ENCODE measurements at regions of chr17 and their contacts with region 1.

Region 1: GRCh38 chr17:79393358-79394202 is 217.3 kb downstream of the RBFOX3 start:
- DNase-seq: peak; percentile 89

Region 2: DNA sequence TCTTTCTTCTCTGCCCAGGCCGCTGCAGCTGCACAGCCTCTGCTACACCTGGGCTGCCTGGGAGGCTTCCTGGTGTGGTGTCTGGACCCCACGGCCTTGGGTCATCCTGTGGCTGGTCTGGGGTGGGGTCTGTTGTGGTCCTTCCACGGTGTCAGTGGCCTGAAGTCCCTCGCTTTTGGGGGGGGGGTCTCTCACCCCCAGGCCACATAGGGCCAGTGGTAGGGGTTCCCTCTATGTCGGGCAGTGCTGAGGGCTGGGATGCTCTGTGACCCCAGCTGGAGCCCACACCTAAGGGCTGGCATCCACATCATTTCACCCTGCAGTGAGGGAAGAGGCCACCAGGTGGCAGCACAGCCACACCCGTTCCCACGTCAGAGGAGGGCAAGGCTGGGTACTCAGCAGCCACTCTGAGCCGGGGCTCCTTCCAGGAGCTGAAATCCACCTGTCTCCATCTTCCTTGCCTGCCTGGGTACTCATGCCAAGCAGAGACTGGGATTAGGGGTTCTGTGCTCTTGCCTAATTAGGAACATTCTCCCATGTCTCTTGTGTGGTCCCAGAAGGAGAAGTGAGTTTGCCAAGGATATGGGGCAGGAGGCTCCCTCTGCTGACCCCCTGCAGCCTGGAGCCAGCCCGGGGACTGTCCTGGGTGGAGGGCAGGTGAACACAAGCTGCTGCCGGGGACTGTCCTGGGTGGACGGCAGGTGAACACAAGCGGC is 306.0 kb before region 1 on chr17:
- CTCF ChIA-PET with region 1: interaction called, 24 read pairs
- POLR2A ChIA-PET with region 1: no interaction called
- DNase-seq: peak; percentile 84

Region 3: GRCh38 chr17:79188048-79188447 is 205.5 kb before region 1 on chr17:
- CTCF ChIA-PET with region 1: interaction called, 40 read pairs
- POLR2A ChIA-PET with region 1: no interaction called
- DNase-seq: peak; percentile 75

Region 4: DNA sequence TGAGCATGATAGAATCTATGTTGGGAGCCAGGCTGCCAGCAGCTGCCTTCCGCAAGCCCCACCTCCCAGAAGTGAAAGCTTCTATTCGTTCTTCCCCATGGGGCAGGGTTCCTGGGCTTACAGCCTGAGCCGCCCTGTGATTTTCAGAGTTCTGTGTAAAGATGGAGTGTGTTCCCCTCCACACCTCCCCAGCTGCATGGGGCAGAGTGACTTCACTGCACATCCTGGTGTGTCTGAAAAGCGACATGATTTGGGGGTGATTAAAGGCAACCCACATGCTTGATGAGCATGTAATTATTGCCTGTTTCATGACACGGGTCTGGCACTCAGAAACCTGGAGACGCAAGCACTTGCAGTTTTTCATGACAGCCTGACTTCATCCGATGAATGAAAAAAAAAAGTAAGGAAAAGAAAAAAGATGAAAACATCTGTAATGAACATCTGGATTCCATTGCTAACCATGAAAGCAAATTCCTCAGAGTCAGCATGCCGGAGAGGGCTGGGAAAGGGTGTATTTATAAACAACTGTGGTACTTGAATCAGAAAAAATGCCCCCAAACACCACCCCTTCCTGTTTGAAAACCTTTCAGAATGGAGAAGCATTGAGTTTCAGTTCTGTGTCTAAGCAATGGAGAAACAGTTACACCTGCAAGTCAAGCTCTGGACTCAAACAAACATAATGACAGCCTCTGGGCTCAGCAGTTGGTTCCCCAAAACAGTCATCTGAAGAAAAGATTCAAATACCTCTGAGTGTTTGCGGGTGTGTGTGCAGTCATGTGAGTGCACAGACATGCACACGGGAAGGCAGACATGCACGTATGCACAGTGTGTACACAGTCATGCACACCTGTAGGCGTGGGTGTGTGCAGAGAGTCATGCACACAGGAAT is 53.0 kb before region 1 on chr17:
- CTCF ChIA-PET with region 1: no interaction called
- POLR2A ChIA-PET with region 1: no interaction called
- DNase-seq: no peak

Measured in HEK293T (cell line).